ENCODE measurements at regions of chr1 and their contacts with region 1.

Region 1: DNA sequence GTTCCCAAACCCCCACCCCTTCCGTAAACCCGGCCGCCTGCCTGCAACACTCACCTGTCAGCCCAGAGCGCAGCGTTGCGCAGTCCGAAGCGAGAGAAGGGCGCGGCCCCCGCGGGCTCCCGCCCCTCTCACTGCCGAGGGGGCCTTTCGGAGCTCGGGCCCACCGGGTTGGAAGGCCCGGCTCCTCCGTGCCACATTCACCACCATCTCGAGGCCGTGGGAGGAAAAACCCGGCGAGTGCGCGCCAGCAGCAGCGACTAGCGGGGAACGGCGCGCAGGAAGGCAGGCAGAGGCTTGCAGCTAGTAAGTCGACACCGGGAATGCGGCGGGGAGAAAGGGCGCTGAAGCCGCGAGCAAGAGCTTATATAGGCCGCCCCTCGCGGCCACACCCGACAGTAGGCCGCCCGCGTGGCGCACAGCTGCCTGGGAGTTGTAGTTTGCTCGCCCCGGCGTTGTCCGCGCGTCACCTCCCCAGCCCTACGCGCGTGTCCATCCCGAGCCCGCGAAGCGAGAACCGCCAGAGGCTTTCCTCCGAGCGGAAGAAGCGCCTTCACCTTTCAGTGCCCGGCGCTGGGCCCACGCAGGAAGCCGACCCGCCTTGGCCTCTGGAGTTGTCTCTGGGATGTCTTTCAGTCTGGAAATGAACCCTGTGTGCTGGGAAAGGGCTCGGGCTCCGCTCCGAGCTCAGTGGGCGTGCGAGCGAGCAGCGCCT is 10.4 kb upstream of the RAB42 start:
- H3K4me3 ChIP-seq: peak overlapping the region; percentile 74
- H3K27ac ChIP-seq: peak overlapping the region; percentile 79
- H3K4me1 ChIP-seq: no peaks in the 10 kb centered on the region; the same call in 1 of the 2 replicates
- CTCF ChIP-seq: peak; percentile 81

Region 2: GRCh38 chr1:28259307-28260167 is 322.2 kb before region 1 on chr1 and contains the start of gene SESN2:
- CTCF ChIA-PET with region 1: no interaction called
- POLR2A ChIA-PET with region 1: interaction called, 14 read pairs
- H3K4me3 ChIP-seq: peak within 1 kb of the TSS; percentile 97
- H3K27ac ChIP-seq: peak within 1 kb of the TSS; percentile 97
- H3K4me1 ChIP-seq: no peaks in the 10 kb centered on the region; the same call in 1 of the 2 replicates
- CTCF ChIP-seq: 0 out of 2 replicates have a peak, but pooled peaks have one; percentile 13

Region 3: DNA sequence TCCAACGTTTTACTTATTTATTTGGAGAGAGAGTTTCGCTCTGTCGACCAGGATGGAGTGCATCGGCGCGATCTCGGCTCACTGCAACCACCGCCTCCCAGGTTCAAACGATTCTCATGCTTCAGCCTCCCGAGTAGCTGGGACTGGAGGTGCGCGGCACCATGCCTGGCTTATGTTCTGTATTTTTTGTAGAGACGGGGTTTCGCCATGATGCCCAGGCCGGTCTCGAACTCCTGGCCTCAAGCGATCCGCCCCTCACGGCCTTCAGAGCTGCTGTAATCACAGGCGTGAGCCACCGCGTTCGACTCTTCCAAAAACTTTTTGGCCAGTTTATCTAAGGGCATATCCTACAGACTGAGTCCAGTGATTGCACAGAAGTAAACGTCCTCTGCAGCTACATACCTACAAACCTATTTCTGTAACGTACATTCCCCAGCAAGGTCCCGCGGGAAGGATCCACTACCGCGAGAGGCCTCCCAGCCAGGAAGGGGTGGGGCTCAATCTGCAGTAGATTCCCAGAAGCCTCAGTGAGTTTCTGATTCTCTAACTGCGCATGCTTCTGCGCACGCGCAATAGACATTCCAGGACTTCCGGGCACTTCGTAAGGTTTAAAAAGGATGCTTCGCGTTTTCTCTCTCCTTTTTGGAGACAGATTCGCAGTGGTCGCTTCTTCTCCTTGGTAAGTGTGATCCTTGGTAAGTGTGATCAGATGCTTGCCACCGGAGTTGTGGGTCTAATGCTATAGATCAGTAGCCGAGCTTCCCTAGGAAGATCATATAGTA is 76.1 kb before region 1 on chr1 and contains the start of gene RCC1:
- CTCF ChIA-PET with region 1: no interaction called
- POLR2A ChIA-PET with region 1: interaction called, 18 read pairs
- H3K4me3 ChIP-seq: peak within 1 kb of the TSS; percentile 79
- H3K27ac ChIP-seq: peak within 1 kb of the TSS; percentile 86
- H3K4me1 ChIP-seq: no peaks in the 10 kb centered on the region; the same call in 1 of the 2 replicates
- CTCF ChIP-seq: no peak

Region 4: DNA sequence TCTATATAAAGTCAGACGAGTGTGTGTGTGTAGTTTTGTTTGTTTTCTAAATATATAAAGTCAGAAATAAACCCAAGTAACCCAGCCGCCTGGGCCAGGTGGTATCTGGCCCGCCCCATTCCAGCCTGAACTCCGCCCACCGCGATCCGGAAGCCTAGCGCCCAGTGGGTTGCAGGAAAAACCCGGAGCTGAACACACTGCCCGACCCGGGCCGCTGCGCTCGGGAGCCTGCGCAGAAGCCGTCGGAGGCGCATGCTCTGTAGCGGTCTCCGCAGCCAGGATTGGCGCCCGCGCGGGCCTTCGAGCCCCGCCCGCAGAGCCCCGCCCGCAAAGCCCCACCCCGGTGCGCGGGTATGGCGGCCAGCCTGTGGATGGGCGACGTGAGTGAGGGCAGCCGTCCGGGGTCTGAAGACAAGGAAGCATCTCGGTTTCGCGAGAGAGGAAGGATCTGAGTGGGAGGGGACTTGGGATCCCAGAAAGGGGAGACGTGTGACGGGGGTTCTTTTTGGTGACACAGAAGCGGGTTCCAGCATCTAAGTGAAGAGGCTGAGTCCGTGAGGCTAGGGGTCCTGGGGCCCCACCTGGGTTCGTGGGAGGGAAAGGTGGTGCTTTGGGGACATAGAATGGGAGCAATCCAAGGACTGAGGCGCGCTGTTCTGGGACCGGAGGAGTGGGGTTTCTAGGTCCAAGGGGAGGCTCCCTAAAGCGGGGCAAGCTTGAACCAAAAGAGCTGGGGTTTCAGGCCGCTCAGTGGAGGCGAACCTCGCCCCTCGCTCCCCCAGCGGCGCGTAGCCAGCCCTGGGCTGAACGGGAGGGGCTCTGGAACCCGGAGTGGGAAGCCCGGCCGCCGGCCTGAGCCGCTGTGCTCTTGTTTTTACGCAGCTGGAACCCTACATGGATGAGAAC is 28.7 kb before region 1 on chr1 and contains the start of gene TRNAU1AP:
- CTCF ChIA-PET with region 1: interaction called, 7 read pairs
- POLR2A ChIA-PET with region 1: interaction called, 49 read pairs
- H3K4me3 ChIP-seq: peak within 1 kb of the TSS; percentile 58
- H3K27ac ChIP-seq: peak within 1 kb of the TSS; percentile 69
- H3K4me1 ChIP-seq: no peaks in the 10 kb centered on the region
- CTCF ChIP-seq: no peak

Region 5: GRCh38 chr1:28642847-28643635 is 61.3 kb after region 1 on chr1 and contains the start of gene TAF12:
- CTCF ChIA-PET with region 1: no interaction called
- POLR2A ChIA-PET with region 1: interaction called, 35 read pairs
- H3K4me3 ChIP-seq: peak within 1 kb of the TSS; percentile 75
- H3K27ac ChIP-seq: peak within 1 kb of the TSS; percentile 65
- H3K4me1 ChIP-seq: no peaks in the 10 kb centered on the region; the same call in 1 of the 2 replicates
- CTCF ChIP-seq: peak; percentile 95

Region 6: GRCh38 chr1:29181413-29182225 is 599.9 kb after region 1 on chr1 and contains the start of gene SRSF4:
- CTCF ChIA-PET with region 1: no interaction called
- POLR2A ChIA-PET with region 1: interaction called, 13 read pairs
- H3K4me3 ChIP-seq: peak within 1 kb of the TSS; percentile 100
- H3K27ac ChIP-seq: peak within 1 kb of the TSS; percentile 99
- H3K4me1 ChIP-seq: peaks cover 6% of the 10 kb centered on the region; the same call in 1 of the 2 replicates
- CTCF ChIP-seq: peak; percentile 100